Vagina (tissue), 2 donors: ENCODE measurements at regions of chr10 and their contacts with region 1.

Region 1: GRCh38 chr10:102132563-102133372 is at the start of gene PPRC1:
- DNase-seq: peak in 1 of 2 donors; percentile 99
- H3K4me3 ChIP-seq: peak within 1 kb of the TSS; percentile 83 to 97
- H3K27ac ChIP-seq: peak within 1 kb of the TSS; percentile 86
- H3K4me1 ChIP-seq: peaks cover 37% of the 10 kb centered on the region
- H3K27me3 ChIP-seq: no peaks in the 10 kb centered on the region
- CTCF ChIP-seq: peak; percentile 62 to 98 (median 93)
- POLR2A ChIP-seq: peak in 1 of 2 donors; percentile 77
- total RNA-seq, gene PPRC1: 29.5 TPM

Region 2: GRCh38 chr10:101782811-101783735 is 349.7 kb before region 1 on chr10 and contains the start of gene NPM3:
- intact Hi-C with region 1: no loop called
- DNase-seq: no peak
- H3K4me3 ChIP-seq: peak within 1 kb of the TSS; percentile 53 to 70
- H3K27ac ChIP-seq: peak within 1 kb of the TSS; percentile 43
- H3K4me1 ChIP-seq: peaks cover 62% of the 10 kb centered on the region
- H3K27me3 ChIP-seq: no peaks in the 10 kb centered on the region
- CTCF ChIP-seq: no peak
- POLR2A ChIP-seq: no peak
- total RNA-seq, gene NPM3: 39.5 TPM

Region 3: GRCh38 chr10:102151774-102152544 is 19.2 kb after region 1 on chr10 and contains the start of gene NOLC1:
- intact Hi-C with region 1: loop called (anchors 2 kb)
- DNase-seq: peak; percentile 99 to 100
- H3K4me3 ChIP-seq: peak within 1 kb of the TSS; percentile 66 to 93
- H3K27ac ChIP-seq: peak within 1 kb of the TSS; percentile 81
- H3K4me1 ChIP-seq: peaks cover 29% of the 10 kb centered on the region
- H3K27me3 ChIP-seq: no peaks in the 10 kb centered on the region
- CTCF ChIP-seq: no peak
- POLR2A ChIP-seq: peak in 1 of 2 donors; percentile 76
- total RNA-seq, gene NOLC1: 61.9 TPM